PC-9 (cell line): ENCODE measurements at regions of chr10 and their contacts with region 1.

Region 1: GRCh38 chr10:63268798-63269503 is 135.8 kb downstream of the NRBF2 start:
- DNase-seq: peak; percentile 82 to 96
- H3K4me3 ChIP-seq: peak overlapping the region; percentile 71
- H3K27ac ChIP-seq: peak overlapping the region; percentile 96
- H3K4me1 ChIP-seq: peaks cover 34% of the 10 kb centered on the region
- H3K27me3 ChIP-seq: no peaks in the 10 kb centered on the region
- CTCF ChIP-seq: peak; percentile 25; the same call in 1 of the 2 replicates

Region 2: GRCh38 chr10:63217120-63217605 is 51.8 kb before region 1 on chr10:
- CTCF ChIA-PET with region 1: interaction called, 3 read pairs
- POLR2A ChIA-PET with region 1: no interaction called
- intact Hi-C with region 1: loop called (anchors 1 kb)
- DNase-seq: peak in 1 of 2 experiments; percentile 64
- H3K4me3 ChIP-seq: no peak overlapping the region
- H3K27ac ChIP-seq: peak overlapping the region; percentile 0; the same call in 1 of the 2 replicates
- H3K4me1 ChIP-seq: no peaks in the 10 kb centered on the region
- H3K27me3 ChIP-seq: no peaks in the 10 kb centered on the region
- CTCF ChIP-seq: peak; percentile 91

Region 3: GRCh38 chr10:63331586-63331985 is 62.6 kb after region 1 on chr10:
- CTCF ChIA-PET with region 1: no interaction called
- POLR2A ChIA-PET with region 1: interaction called, 11 read pairs
- intact Hi-C with region 1: no loop called
- DNase-seq: no peak
- H3K4me3 ChIP-seq: no peak overlapping the region
- H3K27ac ChIP-seq: no peak overlapping the region
- H3K4me1 ChIP-seq: no peaks in the 10 kb centered on the region
- H3K27me3 ChIP-seq: no peaks in the 10 kb centered on the region
- CTCF ChIP-seq: no peak

Region 4: DNA sequence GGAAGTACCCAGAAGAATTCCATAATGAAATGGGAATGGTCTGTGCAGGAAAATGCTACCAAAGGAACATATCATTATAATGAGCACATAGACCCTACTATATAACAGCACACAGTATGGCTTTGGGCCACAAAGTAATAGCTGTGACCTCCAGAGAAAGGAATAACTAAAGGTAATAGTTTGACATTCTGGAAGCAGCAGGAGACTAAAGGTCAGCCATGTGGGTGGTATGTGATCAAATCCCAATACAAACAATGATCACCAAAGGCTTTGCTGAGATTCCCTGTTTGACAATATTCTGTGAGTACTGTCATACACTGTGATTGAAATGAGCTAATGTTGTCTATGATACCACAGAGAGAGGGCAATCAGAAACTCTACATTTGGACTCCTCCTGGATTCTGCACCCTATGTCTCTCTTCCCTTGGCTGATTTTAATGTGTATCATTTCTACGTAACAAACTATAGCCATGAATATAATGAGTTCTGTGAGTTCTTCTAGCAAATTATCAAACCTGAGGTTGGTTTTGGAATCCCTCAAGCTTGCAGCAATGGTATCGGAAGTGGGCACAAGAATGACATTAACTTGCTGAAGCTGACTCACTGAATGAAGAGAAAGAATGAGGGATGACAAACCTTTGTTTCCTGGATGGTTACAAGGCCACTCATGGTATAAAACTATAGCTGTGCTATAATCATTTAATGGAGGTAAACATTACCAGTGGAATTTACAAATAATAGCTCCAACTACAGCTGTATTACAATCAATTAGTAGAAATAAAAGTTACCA is 97.2 kb after region 1 on chr10:
- CTCF ChIA-PET with region 1: no interaction called
- POLR2A ChIA-PET with region 1: no interaction called
- intact Hi-C with region 1: no loop called
- DNase-seq: no peak
- H3K4me3 ChIP-seq: no peak overlapping the region
- H3K27ac ChIP-seq: no peak overlapping the region
- H3K4me1 ChIP-seq: no peaks in the 10 kb centered on the region
- H3K27me3 ChIP-seq: no peaks in the 10 kb centered on the region
- CTCF ChIP-seq: no peak

Region 5: GRCh38 chr10:63430097-63430998 is 161.4 kb after region 1 on chr10:
- CTCF ChIA-PET with region 1: no interaction called
- POLR2A ChIA-PET with region 1: interaction called, 6 read pairs
- intact Hi-C with region 1: loop called (anchors 2 kb)
- DNase-seq: peak in 1 of 2 experiments; percentile 69
- H3K4me3 ChIP-seq: no peak overlapping the region
- H3K27ac ChIP-seq: no peak overlapping the region
- H3K4me1 ChIP-seq: peaks cover 13% of the 10 kb centered on the region
- H3K27me3 ChIP-seq: no peaks in the 10 kb centered on the region
- CTCF ChIP-seq: no peak

Region 6: DNA sequence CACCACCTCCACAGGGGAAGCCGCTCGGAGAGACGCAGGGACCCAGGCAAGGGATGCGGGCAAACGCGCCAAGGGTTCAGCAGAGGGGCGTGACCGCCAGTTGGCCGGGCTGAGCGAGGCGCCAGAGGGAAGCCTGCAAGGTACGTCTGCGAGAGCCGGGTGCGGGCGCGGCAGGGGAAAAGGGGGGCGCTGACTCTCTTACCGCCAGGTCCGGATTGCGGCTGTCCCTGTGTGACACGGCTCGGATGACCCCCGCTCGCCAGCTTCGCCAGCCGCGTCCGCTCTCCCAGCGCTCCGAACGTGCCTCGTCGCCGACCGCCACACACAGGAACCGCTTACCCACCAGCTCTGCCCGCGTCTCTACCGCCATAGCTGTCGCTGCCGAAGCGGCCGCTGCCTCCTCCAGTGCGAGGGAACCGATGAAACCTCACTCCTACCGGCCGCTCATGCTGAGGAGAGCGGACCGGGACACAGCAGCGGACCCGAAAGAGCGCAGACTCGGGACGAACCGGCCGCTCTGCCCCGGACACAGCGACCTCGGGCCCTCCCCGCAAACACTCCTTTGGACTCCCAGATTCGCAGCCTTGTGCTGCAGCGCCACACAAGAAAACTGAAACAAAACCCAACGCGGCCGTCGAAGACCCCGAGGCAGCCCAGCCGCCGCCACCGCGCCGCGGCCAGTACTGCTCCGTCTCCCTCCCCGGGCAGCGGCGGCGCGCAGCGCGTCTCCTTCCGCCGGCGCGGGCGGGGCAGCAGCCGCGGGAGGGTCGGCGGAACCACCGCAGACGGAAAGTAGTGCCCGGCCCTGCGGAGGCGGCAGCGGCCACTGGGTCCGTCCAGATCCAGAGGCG is 196.6 kb after region 1 on chr10 and contains the start of gene JMJD1C:
- CTCF ChIA-PET with region 1: interaction called, 3 read pairs
- POLR2A ChIA-PET with region 1: interaction called, 4 read pairs
- intact Hi-C with region 1: loop called (anchors 2 kb)
- DNase-seq: peak; percentile 65 to 80
- H3K4me3 ChIP-seq: peak within 1 kb of the TSS; percentile 94
- H3K27ac ChIP-seq: peak within 1 kb of the TSS; percentile 33
- H3K4me1 ChIP-seq: peaks cover 23% of the 10 kb centered on the region
- H3K27me3 ChIP-seq: no peaks in the 10 kb centered on the region
- CTCF ChIP-seq: no peak
- total RNA-seq, gene JMJD1C: 68.6 and 78.7 TPM in 2 replicates

Region 7: GRCh38 chr10:63521416-63522276 is 252.7 kb after region 1 on chr10:
- CTCF ChIA-PET with region 1: no interaction called
- POLR2A ChIA-PET with region 1: interaction called, 3 read pairs
- intact Hi-C with region 1: loop called (anchors 2 kb)
- DNase-seq: peak; percentile 54 to 74
- H3K4me3 ChIP-seq: peak overlapping the region; percentile 74
- H3K27ac ChIP-seq: peak overlapping the region; percentile 89
- H3K4me1 ChIP-seq: peaks cover 39% of the 10 kb centered on the region
- H3K27me3 ChIP-seq: no peaks in the 10 kb centered on the region
- CTCF ChIP-seq: no peak

Region 8: GRCh38 chr10:63711867-63712716 is 443.1 kb after region 1 on chr10:
- CTCF ChIA-PET with region 1: no interaction called
- POLR2A ChIA-PET with region 1: interaction called, 3 read pairs
- intact Hi-C with region 1: loop called (anchors 1 kb)
- DNase-seq: peak; percentile 98 to 99
- H3K4me3 ChIP-seq: no peak overlapping the region
- H3K27ac ChIP-seq: peak overlapping the region; percentile 53
- H3K4me1 ChIP-seq: peaks cover 39% of the 10 kb centered on the region
- H3K27me3 ChIP-seq: no peaks in the 10 kb centered on the region
- CTCF ChIP-seq: no peak